Posterior cingulate gyrus (tissue), 11 donors: ENCODE measurements at regions of chr6 and their contacts with region 1.

Region 1: DNA sequence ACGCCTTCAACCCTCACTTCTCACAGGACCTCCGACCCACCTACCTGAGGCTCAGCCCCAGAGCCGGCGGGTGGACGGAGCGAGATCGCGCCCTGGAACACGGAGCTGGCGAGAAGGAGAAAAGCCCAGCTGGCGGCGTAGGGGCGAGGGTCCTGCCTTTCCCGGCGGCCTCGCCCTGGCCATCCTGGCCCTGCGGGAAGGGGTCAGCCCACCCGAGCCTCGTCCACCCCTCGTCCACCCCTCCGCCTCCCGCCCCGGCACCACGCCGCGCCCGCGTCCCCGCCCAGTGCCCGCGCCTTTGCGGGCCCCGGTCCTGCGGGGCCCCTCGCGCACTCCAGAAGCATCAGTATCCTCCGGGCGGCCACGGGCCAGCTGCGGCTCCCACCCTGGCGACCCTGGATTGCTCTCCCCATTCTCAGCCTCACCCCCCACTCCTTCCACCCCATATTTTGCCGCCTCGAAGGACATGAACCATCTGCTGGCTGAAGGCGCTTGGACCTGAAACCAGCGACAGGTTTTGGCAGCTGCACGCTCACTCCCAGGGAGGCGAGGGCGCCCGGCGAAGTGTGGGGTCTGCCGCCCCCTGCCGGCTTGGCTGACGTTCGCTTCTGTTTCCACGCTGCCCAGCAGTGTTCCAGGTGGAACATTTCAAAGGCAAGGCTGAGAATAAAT is 65.1 kb downstream of the PLG start:
- DNase-seq: peak; percentile 61 to 97 (median 82)

Region 2: GRCh38 chr6:160685762-160686450 is 81.2 kb before region 1 on chr6:
- intact Hi-C with region 1: no loop called
- DNase-seq: no peak

Region 3: GRCh38 chr6:160733050-160733646 is 34.0 kb before region 1 on chr6:
- intact Hi-C with region 1: loop called (anchors 5 kb)
- DNase-seq: peak in 7 of 10 donors; percentile 19 to 79 (median 40)

Region 4: DNA sequence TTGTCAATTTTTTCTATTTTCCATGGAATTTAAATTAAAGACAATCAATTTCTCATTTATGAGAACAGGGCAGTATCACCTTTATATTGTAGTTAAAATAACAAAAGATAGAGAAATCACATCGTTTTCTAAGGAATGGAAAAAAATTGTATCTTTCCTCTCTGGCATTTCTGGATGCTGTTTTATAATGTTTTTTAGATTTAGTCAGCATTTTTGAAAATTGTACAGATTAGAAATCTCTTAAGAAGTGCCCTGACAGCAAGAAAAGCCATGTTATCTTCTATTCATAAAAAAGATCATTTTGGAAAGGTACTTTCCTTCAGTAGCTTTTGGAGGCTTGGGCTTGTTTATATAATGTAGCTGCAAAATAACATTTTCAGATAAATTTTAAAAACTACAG is 51.8 kb after region 1 on chr6:
- intact Hi-C with region 1: no loop called
- DNase-seq: no peak